Sciatic nerve (tissue), 2 donors: ENCODE measurements at regions of chr2 and their contacts with region 1.

Region 1: GRCh38 chr2:127305990-127306585 is 12.1 kb upstream of the ERCC3 start:
- DNase-seq: no peak
- ATAC-seq: no peak

Region 2: DNA sequence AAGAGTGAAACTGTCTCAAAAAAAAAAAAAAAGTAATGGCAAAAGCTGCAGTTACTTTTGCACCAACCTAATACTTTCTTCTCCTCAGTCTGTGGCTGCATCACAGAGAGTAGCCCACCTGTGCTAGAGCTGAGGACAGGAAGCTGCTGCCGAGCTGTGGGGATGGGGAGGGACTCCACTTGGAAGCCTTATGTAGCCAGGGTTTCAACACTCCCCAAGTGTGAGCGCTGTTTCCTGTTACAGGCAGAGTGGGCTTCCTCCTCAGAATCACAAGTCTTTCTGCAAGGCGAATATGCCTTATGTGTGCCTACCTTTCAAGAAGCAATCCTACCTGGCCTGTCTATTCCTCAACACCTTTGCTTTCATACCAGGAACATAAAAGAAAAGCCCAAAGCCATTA is 49.7 kb before region 1 on chr2:
- intact Hi-C with region 1: loop called (anchors 1 kb)
- DNase-seq: no peak
- ATAC-seq: no peak